ENCODE measurements at regions of chr1 and their contacts with region 1.

Region 1: DNA sequence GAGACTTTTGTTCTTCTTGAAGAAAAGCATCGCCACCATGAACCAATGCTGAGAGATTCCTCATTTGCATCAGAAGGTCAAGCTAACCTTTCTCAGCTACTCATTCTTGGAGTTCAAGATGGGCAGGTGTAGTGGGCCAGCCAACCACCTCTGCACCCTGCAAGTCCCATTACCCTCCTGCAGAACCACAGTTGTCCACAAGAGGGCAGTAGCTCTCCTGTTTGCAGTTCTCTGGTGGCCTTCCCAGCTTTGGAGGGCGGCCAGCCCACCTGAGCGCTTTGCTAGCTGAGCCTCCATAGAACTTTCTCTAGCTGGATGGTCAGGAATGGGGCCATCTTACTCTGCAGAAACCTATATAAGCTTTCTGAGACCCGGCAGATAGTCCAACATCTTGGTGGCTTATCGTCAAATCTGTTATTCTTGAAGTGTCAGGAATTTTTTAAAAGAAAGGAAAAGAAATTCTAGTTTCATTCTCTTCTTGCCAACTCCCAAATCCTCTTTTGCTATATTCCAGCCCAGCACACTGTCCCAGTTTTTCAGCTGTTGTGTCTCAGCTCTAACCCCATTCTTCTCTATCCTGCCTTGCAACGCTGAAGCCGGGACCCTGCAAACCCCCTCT is 11.0 kb upstream of the LMX1A start:
- DNase-seq: peak; percentile 81
- H3K4me3 Mint-ChIP-seq: no peak overlapping the region
- H3K27ac Mint-ChIP-seq: no peak overlapping the region
- H3K4me1 Mint-ChIP-seq: no peaks in the 10 kb centered on the region
- H3K27me3 Mint-ChIP-seq: peaks cover 54% of the 10 kb centered on the region

Region 2: DNA sequence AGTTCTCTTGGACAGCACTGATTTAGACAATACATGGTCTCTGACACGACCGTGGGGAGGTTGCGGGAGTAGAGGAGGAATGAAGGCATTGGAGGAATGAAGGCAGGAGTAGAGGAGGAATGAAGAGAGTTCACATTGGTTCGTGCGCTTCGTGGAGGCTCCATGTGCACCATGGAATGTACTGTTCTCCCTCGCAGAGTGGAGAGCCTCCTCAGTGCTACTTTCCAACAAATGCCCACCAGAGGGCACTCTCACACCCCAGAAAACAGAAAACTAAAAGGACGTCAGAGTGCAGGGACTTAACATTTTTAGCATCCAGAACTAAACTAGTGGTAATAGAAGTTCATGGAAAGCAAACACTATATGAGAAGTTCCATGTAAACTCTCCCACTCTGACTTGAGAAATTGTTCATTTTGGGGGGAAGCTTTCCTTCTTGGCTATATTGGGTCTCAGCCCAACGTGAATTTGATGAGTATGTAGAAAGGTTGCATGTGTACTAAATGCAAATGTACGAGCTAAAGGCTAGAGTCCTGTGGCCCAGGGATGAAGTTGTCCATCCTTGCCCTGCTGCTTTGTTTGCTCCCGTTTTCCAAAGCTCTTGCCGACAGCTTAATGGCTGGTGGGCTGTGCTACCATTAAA is 222.6 kb before region 1 on chr1:
- CTCF ChIA-PET with region 1: interaction called, 20 read pairs
- POLR2A ChIA-PET with region 1: no interaction called
- intact Hi-C with region 1: loop called (anchors 1 kb)
- DNase-seq: peak; percentile 49
- H3K4me3 Mint-ChIP-seq: no peak overlapping the region
- H3K27ac Mint-ChIP-seq: no peak overlapping the region
- H3K4me1 Mint-ChIP-seq: no peaks in the 10 kb centered on the region
- H3K27me3 Mint-ChIP-seq: peaks cover 5% of the 10 kb centered on the region

Region 3: DNA sequence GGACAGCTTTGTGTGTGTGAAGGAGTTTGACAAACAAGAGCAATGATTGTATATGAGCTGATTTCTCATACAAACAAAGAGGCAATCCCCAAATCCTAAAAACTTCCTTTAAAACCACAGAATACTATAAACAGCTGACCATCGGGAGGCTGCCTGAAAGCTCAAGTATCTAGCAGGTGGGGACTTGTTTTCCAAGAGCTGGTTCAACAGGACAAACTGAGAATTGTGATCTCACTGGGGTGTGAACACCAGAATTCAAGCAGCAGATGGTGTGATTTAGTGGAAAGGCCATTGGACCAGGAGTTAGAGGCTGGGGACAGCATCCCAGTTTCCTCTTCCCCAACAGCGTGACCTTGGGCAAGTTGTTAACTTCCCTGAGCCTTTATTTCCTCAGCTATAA is 24.9 kb before region 1 on chr1:
- CTCF ChIA-PET with region 1: interaction called, 30 read pairs
- POLR2A ChIA-PET with region 1: no interaction called
- intact Hi-C with region 1: no loop called
- DNase-seq: no peak
- H3K4me3 Mint-ChIP-seq: no peak overlapping the region
- H3K27ac Mint-ChIP-seq: no peak overlapping the region
- H3K4me1 Mint-ChIP-seq: no peaks in the 10 kb centered on the region
- H3K27me3 Mint-ChIP-seq: peaks cover 31% of the 10 kb centered on the region

Region 4: GRCh38 chr1:165355977-165356811 is 11.3 kb before region 1 on chr1 and contains the start of gene LMX1A:
- CTCF ChIA-PET with region 1: interaction called, 57 read pairs
- POLR2A ChIA-PET with region 1: no interaction called
- intact Hi-C with region 1: no loop called
- DNase-seq: no peak
- H3K4me3 Mint-ChIP-seq: no peak within 1 kb of the TSS
- H3K27ac Mint-ChIP-seq: no peak within 1 kb of the TSS
- H3K4me1 Mint-ChIP-seq: peaks cover 10% of the 10 kb centered on the region
- H3K27me3 Mint-ChIP-seq: peaks cover 61% of the 10 kb centered on the region
- total RNA-seq, gene LMX1A: not detected

Region 5: GRCh38 chr1:165392634-165393571 is 25.4 kb after region 1 on chr1:
- CTCF ChIA-PET with region 1: interaction called, 45 read pairs
- POLR2A ChIA-PET with region 1: no interaction called
- intact Hi-C with region 1: no loop called
- DNase-seq: peak; percentile 93
- H3K4me3 Mint-ChIP-seq: peak overlapping the region; percentile 66
- H3K27ac Mint-ChIP-seq: peak overlapping the region; percentile 81
- H3K4me1 Mint-ChIP-seq: peaks cover 20% of the 10 kb centered on the region
- H3K27me3 Mint-ChIP-seq: peaks cover 57% of the 10 kb centered on the region

Measured in activated CD4-positive, alpha-beta memory T cell treated with anti-CD3 and anti-CD28 coated beads for 36 hours (primary cell).